Endothelial cell of umbilical vein (primary cell): ENCODE measurements at regions of chr1 and their contacts with region 1.

Region 1: GRCh38 chr1:192477630-192478029 is 97.9 kb upstream of the RGS1 start:
- DNase-seq: peak; percentile 65
- H3K4me3 ChIP-seq: no peak overlapping the region
- H3K27ac ChIP-seq: no peak overlapping the region
- H3K4me1 ChIP-seq: no peaks in the 10 kb centered on the region
- H3K27me3 ChIP-seq: no peaks in the 10 kb centered on the region
- CTCF ChIP-seq: peak; percentile 14 to 30
- POLR2A ChIP-seq: no peak

Region 2: DNA sequence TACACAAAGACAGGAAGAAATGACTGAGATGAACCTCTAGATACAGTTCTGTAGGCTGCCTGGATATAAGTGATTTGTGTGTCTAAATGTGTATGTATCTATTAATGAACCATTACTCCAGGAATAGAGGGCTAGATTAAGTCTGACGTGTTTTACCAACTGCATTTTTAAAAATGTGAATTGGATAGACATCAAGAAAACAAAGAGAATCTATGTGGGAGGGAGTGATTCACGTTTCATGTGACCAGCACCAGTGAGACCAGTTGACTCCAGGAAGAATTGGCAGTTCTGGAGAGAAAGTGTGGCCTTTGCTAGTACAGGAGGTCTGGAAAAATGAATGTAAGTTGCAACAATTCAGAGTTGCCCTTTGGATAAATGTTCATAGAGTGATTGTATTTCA is 214.2 kb before region 1 on chr1:
- CTCF ChIA-PET with region 1: no interaction called
- POLR2A ChIA-PET with region 1: no interaction called
- dilution Hi-C with region 1: no loop called
- intact Hi-C with region 1: no loop called
- DNase-seq: peak; percentile 88
- H3K4me3 ChIP-seq: no peak overlapping the region
- H3K27ac ChIP-seq: peak overlapping the region; percentile 83
- H3K4me1 ChIP-seq: peaks cover 28% of the 10 kb centered on the region
- H3K27me3 ChIP-seq: no peaks in the 10 kb centered on the region
- CTCF ChIP-seq: no peak
- POLR2A ChIP-seq: no peak

Region 3: DNA sequence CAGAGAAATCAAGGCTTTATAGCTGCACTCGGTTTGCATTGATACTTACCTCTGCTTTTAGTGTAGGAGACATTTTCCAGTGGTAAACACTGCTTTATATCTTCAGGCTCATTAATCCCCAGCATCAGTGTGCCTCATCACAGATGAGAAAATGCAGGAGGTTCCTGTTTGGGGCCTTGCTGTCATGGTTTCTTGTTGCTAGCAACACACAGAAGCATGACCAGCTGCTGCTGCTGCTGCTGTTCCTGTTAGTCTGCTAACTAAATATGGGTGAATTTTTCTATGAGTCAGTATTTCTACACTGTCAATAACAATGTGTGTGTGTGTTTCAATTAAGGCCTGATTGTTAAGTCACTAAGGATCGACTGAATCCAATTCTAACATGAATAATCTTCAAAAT is 12.1 kb after region 1 on chr1:
- CTCF ChIA-PET with region 1: interaction called, 10 read pairs
- POLR2A ChIA-PET with region 1: no interaction called
- dilution Hi-C with region 1: no loop called
- intact Hi-C with region 1: no loop called
- DNase-seq: peak; percentile 95
- H3K4me3 ChIP-seq: no peak overlapping the region
- H3K27ac ChIP-seq: peak overlapping the region; percentile 53
- H3K4me1 ChIP-seq: peaks cover 4% of the 10 kb centered on the region
- H3K27me3 ChIP-seq: no peaks in the 10 kb centered on the region
- CTCF ChIP-seq: no peak
- POLR2A ChIP-seq: no peak

Region 4: GRCh38 chr1:192539297-192540092 is 61.9 kb after region 1 on chr1:
- CTCF ChIA-PET with region 1: interaction called, 19 read pairs
- POLR2A ChIA-PET with region 1: no interaction called
- dilution Hi-C with region 1: no loop called
- intact Hi-C with region 1: no loop called
- DNase-seq: peak; percentile 95
- H3K4me3 ChIP-seq: no peak overlapping the region
- H3K27ac ChIP-seq: peak overlapping the region; percentile 87
- H3K4me1 ChIP-seq: peaks cover 18% of the 10 kb centered on the region
- H3K27me3 ChIP-seq: no peaks in the 10 kb centered on the region
- CTCF ChIP-seq: no peak
- POLR2A ChIP-seq: no peak

Region 5: DNA sequence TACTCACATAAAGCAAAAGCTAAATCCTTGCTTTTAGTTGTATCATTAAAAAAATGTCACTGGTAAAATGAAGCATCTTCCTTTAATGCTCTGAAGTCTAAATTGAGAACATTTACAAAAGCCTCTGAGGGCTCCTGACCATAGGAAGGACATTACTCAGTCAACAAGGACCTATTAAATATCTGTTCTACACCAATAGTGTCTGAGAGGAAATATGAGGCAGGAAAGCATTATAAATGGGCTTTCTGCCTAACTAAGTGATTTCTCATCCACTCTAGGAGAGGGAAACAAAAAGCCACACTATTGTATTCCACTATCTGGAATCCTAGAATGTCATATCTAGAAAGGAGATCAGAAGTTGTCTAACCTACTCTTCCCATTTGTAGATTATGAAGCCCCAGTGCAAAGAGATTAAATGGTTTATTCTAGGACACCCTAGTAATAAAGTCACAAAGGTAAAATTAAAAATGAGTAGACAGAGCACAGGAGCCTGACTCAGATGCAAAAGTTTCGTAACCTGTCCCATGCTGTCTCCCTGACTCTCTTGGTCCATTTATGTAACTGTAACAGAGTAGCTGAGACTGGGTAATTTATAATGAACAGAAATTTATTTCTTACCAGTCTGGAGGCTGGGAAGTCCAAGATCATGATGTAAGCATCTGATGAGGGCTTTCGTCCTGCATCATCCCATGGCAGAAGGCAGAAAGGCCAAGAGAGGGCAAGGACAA is 115.5 kb after region 1 on chr1:
- CTCF ChIA-PET with region 1: interaction called, 11 read pairs
- POLR2A ChIA-PET with region 1: no interaction called
- dilution Hi-C with region 1: loop called (anchors 25 kb)
- intact Hi-C with region 1: no loop called
- DNase-seq: peak; percentile 62
- H3K4me3 ChIP-seq: no peak overlapping the region
- H3K27ac ChIP-seq: no peak overlapping the region
- H3K4me1 ChIP-seq: peaks cover 6% of the 10 kb centered on the region
- H3K27me3 ChIP-seq: no peaks in the 10 kb centered on the region
- CTCF ChIP-seq: no peak
- POLR2A ChIP-seq: no peak

Region 6: DNA sequence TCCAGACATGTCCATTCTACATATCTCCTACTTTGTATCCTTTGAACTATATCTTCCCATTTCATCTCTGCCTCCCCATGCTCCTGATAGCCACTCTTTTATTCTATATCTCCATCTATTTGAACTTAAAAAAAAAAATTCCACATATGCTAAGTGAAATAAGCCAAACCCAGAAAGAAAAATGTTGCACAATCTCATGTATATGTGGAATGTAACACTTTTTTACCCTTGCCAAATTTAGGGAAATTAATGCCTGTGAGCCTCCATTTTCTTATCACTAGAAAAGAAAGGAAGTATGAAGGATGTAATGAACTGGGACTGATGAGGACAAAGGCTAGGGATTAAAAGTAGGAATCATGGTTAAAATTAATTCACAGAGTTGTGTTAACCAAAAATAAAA is 211.8 kb after region 1 on chr1:
- CTCF ChIA-PET with region 1: no interaction called
- POLR2A ChIA-PET with region 1: no interaction called
- dilution Hi-C with region 1: no loop called
- intact Hi-C with region 1: no loop called
- DNase-seq: no peak
- H3K4me3 ChIP-seq: no peak overlapping the region
- H3K27ac ChIP-seq: no peak overlapping the region
- H3K4me1 ChIP-seq: no peaks in the 10 kb centered on the region
- H3K27me3 ChIP-seq: no peaks in the 10 kb centered on the region
- CTCF ChIP-seq: no peak
- POLR2A ChIP-seq: no peak

Region 7: DNA sequence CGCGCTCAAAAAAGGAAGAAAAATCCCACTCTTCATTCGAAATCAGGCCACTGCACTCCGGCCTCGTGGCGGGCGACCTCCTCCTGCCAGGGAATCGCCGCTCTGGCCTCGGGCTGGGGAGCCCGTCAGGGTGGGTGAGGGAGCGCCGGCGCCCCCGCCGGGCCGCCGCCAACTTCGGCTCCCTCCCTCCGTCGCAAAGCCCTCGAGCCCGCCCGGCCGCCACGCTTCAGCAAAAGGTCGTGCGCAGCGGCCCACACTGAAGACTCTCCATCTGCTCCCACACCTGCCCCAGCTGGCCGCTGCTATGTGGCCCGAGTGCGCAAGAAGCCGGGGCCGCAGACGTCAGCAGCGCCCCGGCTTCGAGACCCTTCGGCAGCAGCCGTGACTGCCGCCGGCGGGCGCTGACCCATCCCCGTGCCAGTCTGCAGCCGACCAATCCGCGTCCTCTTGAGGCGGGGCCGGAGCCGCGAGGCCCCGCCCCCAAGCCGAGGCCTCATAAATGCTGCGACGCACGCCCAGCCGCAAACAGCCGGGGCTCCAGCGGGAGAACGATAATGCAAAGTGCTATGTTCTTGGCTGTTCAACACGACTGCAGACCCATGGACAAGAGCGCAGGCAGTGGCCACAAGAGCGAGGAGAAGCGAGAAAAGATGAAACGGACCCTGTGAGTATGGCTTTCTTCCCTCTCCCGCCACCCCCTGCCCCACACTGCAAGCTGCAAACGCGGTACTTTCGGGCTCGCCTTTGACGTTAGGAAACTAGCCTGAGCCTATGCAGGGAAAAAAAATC is 331.1 kb after region 1 on chr1 and contains the start of gene RGS2:
- CTCF ChIA-PET with region 1: interaction called, 52 read pairs
- POLR2A ChIA-PET with region 1: no interaction called
- dilution Hi-C with region 1: loop called (anchors 25 kb)
- intact Hi-C with region 1: loop called (anchors 1 kb)
- DNase-seq: peak; percentile 95
- H3K4me3 ChIP-seq: peak within 1 kb of the TSS; percentile 71 to 87 (median 74)
- H3K27ac ChIP-seq: peak within 1 kb of the TSS; percentile 97
- H3K4me1 ChIP-seq: peaks cover 38% of the 10 kb centered on the region
- H3K27me3 ChIP-seq: no peaks in the 10 kb centered on the region
- CTCF ChIP-seq: peak in 1 of 2 donors; percentile 15
- POLR2A ChIP-seq: peak; percentile 100
- total RNA-seq, gene RGS2: 9.1 and 9.5 TPM in 2 replicates

Region 8: DNA sequence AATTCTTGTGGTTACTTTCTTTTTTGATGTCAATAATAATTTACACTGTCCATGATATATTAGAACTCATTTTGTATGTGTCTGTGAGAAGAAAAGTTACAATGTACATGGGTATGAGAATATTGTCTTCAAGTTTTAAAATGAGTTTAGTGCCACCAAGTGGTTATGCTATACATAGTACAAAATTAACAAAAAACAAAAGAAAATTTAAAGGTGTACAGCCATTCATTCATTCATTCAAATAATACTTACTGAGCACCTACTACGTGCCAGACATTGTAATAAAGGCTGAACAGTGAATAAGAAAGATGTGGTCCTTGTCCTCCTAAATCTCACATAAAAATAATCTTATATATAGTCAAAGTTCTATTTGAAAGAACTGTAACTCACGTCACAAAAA is 553.8 kb after region 1 on chr1:
- CTCF ChIA-PET with region 1: interaction called, 22 read pairs
- POLR2A ChIA-PET with region 1: no interaction called
- dilution Hi-C with region 1: no loop called
- intact Hi-C with region 1: no loop called
- DNase-seq: peak; percentile 38
- H3K4me3 ChIP-seq: no peak overlapping the region
- H3K27ac ChIP-seq: no peak overlapping the region
- H3K4me1 ChIP-seq: no peaks in the 10 kb centered on the region
- H3K27me3 ChIP-seq: no peaks in the 10 kb centered on the region
- CTCF ChIP-seq: peak; percentile 5 to 9
- POLR2A ChIP-seq: no peak

Region 9: DNA sequence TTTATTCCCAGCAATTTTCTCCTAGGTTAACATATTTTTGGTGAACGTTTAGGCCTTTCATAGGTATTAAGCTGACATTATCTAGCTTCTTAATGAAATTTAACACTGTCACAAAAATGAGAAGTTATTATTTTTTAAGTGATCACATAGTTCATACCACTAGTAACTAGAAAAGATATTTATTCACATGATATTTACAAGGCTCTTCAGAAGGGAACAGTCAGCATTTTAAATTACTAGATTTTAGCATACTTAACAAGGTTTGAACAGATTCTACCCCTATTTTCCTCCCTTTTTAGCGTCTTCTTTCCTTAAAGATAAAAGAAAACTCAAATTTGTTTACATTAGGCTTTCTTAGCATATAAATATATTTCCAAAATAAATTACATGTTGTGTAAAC is 774.3 kb after region 1 on chr1:
- CTCF ChIA-PET with region 1: no interaction called
- POLR2A ChIA-PET with region 1: no interaction called
- dilution Hi-C with region 1: no loop called
- intact Hi-C with region 1: no loop called
- DNase-seq: no peak
- H3K4me3 ChIP-seq: no peak overlapping the region
- H3K27ac ChIP-seq: no peak overlapping the region
- H3K4me1 ChIP-seq: no peaks in the 10 kb centered on the region
- H3K27me3 ChIP-seq: no peaks in the 10 kb centered on the region
- CTCF ChIP-seq: no peak
- POLR2A ChIP-seq: no peak